Psoas muscle (tissue), 8 donors: ENCODE measurements at regions of chr20 and their contacts with region 1.

Region 1: GRCh38 chr20:58243653-58244410 is 15.4 kb upstream of the ANKRD60 start:
- DNase-seq: no peak
- ATAC-seq: no peak
- H3K4me3 ChIP-seq: no peak overlapping the region
- H3K27ac ChIP-seq: no peak overlapping the region
- H3K4me1 ChIP-seq: no peaks in the 10 kb centered on the region
- H3K27me3 ChIP-seq: no peaks in the 10 kb centered on the region
- CTCF ChIP-seq: no peak

Region 2: DNA sequence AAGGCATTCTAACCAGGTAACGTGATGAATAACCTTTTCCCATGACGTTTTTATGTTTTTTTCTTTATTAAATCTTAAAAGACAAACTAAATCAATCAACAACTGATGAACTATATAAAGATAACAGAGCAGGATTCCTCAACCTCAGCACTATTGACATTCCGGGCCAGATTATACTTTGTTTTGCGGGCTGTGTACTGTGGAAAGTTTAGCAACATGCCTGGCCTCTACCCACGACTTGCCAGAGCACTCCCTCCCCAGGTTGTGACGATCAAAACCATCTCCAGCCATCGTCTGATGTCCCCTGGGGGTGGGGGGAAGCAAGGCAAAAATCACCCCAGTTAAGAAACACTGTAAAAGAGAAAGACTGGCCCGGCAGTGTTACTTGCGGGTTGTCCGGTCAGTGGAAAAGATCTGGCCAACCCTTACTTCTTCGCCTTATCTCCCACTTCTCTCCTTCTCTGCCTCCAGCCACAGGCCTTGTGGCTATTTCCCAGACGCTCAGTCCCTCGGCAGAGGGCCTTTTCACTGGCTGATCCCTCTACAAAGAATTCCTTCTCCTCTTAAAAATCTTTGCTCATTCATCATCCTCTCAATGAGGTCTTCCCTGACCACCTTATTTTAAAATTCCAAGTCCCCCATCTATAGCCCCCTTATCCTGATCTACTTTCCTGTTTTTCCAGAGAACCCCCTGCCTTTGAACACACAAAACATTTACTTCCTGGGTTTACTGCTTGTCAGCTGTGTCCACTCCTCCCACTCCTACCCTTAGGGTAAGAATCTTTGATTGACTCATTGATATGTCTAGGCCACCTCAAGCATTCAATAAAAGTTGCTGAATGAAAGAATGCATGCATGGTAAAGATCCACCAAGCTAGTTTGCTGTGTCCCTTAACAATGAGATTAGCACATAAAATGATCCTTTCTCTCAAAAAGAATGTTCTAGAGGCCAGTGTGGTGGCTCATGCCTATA is 50.9 kb after region 1 on chr20:
- intact Hi-C with region 1: loop called in 1 of 2 experiments (anchors 5 kb)
- DNase-seq: no peak
- ATAC-seq: no peak
- H3K4me3 ChIP-seq: no peak overlapping the region
- H3K27ac ChIP-seq: no peak overlapping the region
- H3K4me1 ChIP-seq: no peaks in the 10 kb centered on the region
- H3K27me3 ChIP-seq: no peaks in the 10 kb centered on the region
- CTCF ChIP-seq: no peak